ENCODE measurements at regions of chr1 and their contacts with region 1.

Region 1: GRCh38 chr1:205284343-205285144 is 37.0 kb downstream of the NUAK2 start:
- DNase-seq: peak; percentile 78 to 96 (median 93)
- ATAC-seq: peak; percentile 62
- H3K4me3 ChIP-seq: peak overlapping the region; percentile 34 to 40
- H3K4me3 Mint-ChIP-seq: peak overlapping the region; percentile 83
- H3K27ac ChIP-seq: peak overlapping the region; percentile 56 to 71
- H3K27ac Mint-ChIP-seq: peak overlapping the region; percentile 96
- H3K4me1 ChIP-seq: peaks cover 81% of the 10 kb centered on the region
- H3K4me1 Mint-ChIP-seq: peaks cover 85% of the 10 kb centered on the region
- H3K27me3 ChIP-seq: no peaks in the 10 kb centered on the region
- H3K27me3 Mint-ChIP-seq: no peaks in the 10 kb centered on the region
- CTCF ChIP-seq: no peak

Region 2: DNA sequence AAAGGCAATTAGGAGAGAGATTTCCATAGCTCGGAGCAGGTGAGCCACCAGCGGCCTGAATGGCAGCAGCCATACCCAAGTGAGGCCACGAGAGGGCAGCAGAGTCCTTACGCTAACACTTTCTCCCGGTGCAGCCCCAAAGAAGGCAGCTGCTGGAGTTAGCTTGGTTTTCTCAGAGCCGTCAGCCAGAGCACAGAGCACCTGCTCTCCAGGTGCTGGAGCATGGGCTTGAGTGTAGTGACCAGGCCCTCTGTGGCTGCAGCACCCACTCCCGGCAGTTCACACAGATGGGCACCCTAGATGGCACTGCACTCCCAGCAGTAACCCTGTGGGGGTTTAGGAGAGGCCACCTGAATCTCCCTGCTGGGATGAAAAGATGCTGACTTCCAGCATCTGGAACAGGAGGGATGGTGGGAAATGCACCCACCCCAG is 11.0 kb before region 1 on chr1:
- CTCF ChIA-PET with region 1: interaction called, 178 read pairs
- POLR2A ChIA-PET with region 1: interaction called, 121 read pairs
- intact Hi-C with region 1: loop called (anchors 1 kb)
- DNase-seq: peak; percentile 76 to 94 (median 86)
- ATAC-seq: peak; percentile 88
- H3K4me3 ChIP-seq: peak overlapping the region in 1 of 2 experiments; percentile 44
- H3K4me3 Mint-ChIP-seq: peak overlapping the region; percentile 61
- H3K27ac ChIP-seq: no peak overlapping the region
- H3K27ac Mint-ChIP-seq: peak overlapping the region; percentile 83
- H3K4me1 ChIP-seq: peaks cover 46% of the 10 kb centered on the region
- H3K4me1 Mint-ChIP-seq: peaks cover 40% of the 10 kb centered on the region
- H3K27me3 ChIP-seq: no peaks in the 10 kb centered on the region
- H3K27me3 Mint-ChIP-seq: no peaks in the 10 kb centered on the region
- CTCF ChIP-seq: peak; percentile 95

Region 3: DNA sequence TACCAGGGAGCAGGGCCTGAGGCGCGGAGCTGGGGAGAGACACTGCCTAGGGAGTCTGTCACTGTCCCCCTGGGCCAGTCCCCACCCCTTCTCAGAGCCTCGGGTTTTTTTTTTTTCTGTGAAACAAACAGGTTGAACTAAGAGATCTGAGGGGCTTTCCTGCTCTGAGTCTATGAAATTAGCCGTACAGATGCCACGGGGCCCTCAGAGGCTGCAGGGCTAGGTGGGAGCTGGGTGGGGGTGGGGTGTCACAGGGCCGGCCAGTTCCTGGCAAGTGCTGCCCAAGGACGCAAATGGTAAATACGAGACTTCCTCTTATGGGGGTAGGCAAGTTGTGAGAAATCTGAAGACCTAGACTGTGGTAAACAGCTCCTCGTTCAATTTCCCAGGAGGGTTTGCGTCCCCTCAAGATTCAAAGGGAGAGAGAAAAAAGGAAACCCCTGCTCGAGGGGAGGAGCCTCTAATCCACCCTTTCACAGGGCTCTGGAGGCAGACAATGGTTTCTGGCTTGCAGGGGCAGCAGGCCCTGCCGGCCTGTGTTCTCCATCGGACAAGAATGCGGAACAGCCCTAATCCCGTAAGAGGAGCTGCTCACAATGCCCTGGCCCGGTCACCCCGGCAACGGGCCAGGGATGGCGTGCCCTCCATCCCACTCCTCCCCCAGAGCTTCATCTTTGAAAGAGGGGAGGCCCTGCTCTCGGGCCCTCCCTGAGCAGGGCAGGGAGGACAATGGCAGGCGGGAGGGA is 29.2 kb after region 1 on chr1:
- CTCF ChIA-PET with region 1: interaction called, 1,393 read pairs
- POLR2A ChIA-PET with region 1: interaction called, 161 read pairs
- intact Hi-C with region 1: loop called (anchors 1 kb)
- DNase-seq: peak in 7 of 9 experiments; percentile 16 to 89 (median 61)
- ATAC-seq: peak; percentile 80
- H3K4me3 ChIP-seq: peak overlapping the region; percentile 46 to 72
- H3K4me3 Mint-ChIP-seq: peak overlapping the region; percentile 87
- H3K27ac ChIP-seq: peak overlapping the region; percentile 70 to 71
- H3K27ac Mint-ChIP-seq: peak overlapping the region; percentile 96
- H3K4me1 ChIP-seq: peaks cover 93% of the 10 kb centered on the region
- H3K4me1 Mint-ChIP-seq: peaks cover 93% of the 10 kb centered on the region
- H3K27me3 ChIP-seq: no peaks in the 10 kb centered on the region
- H3K27me3 Mint-ChIP-seq: no peaks in the 10 kb centered on the region
- CTCF ChIP-seq: no peak

Region 4: DNA sequence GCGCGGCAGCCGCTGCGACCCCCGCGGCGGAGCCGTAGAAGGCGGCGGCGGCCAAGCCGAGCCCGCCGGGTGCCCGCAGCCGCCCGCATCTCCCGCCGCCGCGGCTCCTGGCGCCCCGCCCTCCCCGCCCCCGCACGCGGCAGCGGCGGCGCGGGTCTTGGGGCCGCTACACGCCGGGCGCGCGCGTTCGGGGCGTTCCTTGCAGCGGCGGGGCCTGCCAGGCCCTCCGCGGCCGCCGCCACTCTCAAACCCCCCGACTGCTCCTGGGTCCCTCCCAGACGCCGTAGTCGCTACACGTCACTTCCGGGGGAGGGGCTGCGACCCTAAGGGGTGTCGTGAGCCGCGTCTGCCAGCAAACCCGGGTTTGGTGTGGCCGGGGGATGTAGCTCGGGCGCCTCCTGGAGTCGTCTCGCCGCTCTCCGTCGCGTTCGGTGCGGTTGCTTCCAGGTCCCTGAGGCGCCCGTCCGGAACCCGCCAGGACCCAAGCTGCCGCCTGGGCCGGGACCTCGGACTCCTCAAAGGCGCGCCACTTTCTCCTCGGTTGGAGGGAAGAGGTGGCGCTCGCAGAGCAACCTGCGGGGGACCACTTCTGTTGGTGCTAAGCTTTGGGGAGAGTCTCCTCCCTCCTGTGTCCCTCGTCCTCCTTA is 347.3 kb after region 1 on chr1 and contains the start of gene ELK4:
- CTCF ChIA-PET with region 1: no interaction called
- POLR2A ChIA-PET with region 1: no interaction called
- intact Hi-C with region 1: loop called (anchors 5 kb)
- DNase-seq: peak; percentile 99 to 100 (median 100)
- ATAC-seq: peak; percentile 78
- H3K4me3 ChIP-seq: peak within 1 kb of the TSS; percentile 64 to 71
- H3K4me3 Mint-ChIP-seq: peak within 1 kb of the TSS; percentile 89
- H3K27ac ChIP-seq: peak within 1 kb of the TSS; percentile 75 to 95
- H3K27ac Mint-ChIP-seq: peak within 1 kb of the TSS; percentile 99
- H3K4me1 ChIP-seq: peaks cover 37% of the 10 kb centered on the region
- H3K4me1 Mint-ChIP-seq: peaks cover 44% of the 10 kb centered on the region
- H3K27me3 ChIP-seq: no peaks in the 10 kb centered on the region
- H3K27me3 Mint-ChIP-seq: no peaks in the 10 kb centered on the region
- CTCF ChIP-seq: peak; percentile 78
- total RNA-seq, gene ELK4: 142 to 147 TPM

Region 5: DNA sequence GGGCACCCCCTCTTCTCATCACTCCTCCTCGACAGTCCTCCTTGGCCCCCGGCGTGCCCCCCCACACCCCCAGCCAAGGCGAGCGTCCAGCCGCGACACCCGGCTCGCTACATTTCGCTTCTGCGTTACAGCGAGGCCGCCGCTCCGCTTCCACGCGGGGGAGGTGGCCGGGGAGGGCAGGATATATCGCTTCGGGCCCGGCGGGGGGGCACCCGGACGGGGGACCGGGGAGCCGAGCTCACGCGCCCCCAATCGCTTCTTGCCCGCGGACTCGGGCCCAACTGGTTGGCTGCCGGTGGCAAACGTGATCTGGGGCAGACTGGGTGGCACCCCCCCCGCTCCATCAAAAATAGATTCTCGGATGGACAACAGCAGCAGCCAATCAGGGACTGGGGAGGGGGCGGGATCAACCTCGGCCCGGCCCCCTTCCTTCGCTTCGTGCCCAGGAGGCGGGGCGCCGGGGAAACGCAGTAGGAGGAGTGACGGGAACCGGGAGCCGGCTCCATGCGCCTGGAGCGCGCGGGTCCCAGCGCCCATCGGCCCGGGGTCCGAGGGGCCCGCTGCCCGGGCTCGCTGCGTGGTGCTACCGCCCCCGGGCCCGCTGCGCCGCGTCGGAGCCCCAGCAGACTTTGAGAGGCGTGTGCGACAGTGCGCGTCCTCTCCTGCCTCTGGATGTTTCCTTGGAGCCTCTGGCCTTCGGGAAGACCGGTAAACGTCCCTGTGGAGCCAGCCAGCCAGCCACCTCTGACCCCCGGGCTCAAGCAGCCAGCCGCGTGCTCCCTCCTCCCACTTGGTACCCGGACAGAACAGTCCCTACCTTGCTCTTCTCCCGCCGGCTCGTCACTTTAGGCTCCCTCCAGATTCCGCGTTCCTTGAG is 528.6 kb after region 1 on chr1 and contains the start of gene SLC41A1:
- CTCF ChIA-PET with region 1: no interaction called
- POLR2A ChIA-PET with region 1: no interaction called
- intact Hi-C with region 1: loop called in 1 of 2 experiments (anchors 10 kb)
- DNase-seq: peak; percentile 82 to 97 (median 92)
- ATAC-seq: peak; percentile 94
- H3K4me3 ChIP-seq: peak within 1 kb of the TSS; percentile 78 to 82
- H3K4me3 Mint-ChIP-seq: peak within 1 kb of the TSS; percentile 91
- H3K27ac ChIP-seq: peak within 1 kb of the TSS; percentile 43 to 64
- H3K27ac Mint-ChIP-seq: peak within 1 kb of the TSS; percentile 84
- H3K4me1 ChIP-seq: peaks cover 51% of the 10 kb centered on the region
- H3K4me1 Mint-ChIP-seq: peaks cover 58% of the 10 kb centered on the region
- H3K27me3 ChIP-seq: no peaks in the 10 kb centered on the region
- H3K27me3 Mint-ChIP-seq: no peaks in the 10 kb centered on the region
- CTCF ChIP-seq: no peak
- total RNA-seq, gene SLC41A1: 36.8 to 41.7 TPM

Measured in CD8-positive, alpha-beta T cell (primary cell).